ENCODE measurements at regions of chr4 and their contacts with region 1.

Region 1: DNA sequence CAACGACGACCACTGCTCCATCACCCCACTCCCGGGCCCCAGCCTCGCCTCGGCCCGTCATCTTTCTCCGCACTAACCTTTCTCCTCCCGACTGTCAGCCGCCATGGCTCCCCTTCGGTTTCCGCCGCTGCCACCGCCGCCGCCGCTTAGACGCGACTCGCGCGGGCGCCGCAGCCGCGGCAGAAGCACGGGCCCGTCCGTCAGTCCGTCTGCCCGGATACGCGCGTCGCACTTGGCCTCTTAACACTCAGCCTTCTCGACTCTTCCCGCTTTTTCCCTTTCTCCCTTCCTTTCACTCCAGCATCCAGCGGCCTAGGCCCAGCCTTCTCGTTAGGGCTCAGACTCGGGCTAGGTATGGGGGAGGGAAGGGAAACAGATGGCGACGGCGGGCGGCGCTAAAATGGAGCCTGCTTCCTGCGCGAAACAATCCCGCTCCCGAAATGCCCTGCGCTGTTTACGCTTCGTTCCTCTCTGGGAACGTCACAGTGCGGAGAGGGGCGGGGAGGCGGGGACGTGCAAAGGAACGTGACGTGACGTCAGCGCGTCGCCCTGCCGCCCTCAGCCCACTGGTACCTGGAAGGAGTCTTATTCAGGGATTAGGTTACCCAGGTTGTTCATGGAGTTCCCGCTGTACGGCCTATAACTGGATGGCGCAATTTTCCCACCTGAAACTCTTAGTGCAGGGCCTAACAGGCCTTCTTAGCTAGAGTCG is at the start of gene YTHDC1:
- DNase-seq: peak; percentile 84 to 97 (median 95)
- ATAC-seq: peak; percentile 97
- H3K4me3 ChIP-seq: peak within 1 kb of the TSS; percentile 100
- H3K4me3 Mint-ChIP-seq: peak within 1 kb of the TSS; percentile 94 to 100 (median 98)
- H3K27ac ChIP-seq: peak within 1 kb of the TSS; percentile 96
- H3K27ac Mint-ChIP-seq: peak within 1 kb of the TSS; percentile 97 to 100 (median 100)
- H3K4me1 ChIP-seq: peaks cover 26 to 35% of the 10 kb centered on the region in 2 donors
- H3K4me1 Mint-ChIP-seq: peaks cover 16 to 48% (median 41%) of the 10 kb centered on the region in 7 donors
- H3K27me3 ChIP-seq: no peaks in the 10 kb centered on the region
- H3K27me3 Mint-ChIP-seq: peaks cover 0 to 20% (median 0%) of the 10 kb centered on the region in 5 donors
- total RNA-seq, gene YTHDC1: 99.4 to 254 (median 219) TPM

Region 2: DNA sequence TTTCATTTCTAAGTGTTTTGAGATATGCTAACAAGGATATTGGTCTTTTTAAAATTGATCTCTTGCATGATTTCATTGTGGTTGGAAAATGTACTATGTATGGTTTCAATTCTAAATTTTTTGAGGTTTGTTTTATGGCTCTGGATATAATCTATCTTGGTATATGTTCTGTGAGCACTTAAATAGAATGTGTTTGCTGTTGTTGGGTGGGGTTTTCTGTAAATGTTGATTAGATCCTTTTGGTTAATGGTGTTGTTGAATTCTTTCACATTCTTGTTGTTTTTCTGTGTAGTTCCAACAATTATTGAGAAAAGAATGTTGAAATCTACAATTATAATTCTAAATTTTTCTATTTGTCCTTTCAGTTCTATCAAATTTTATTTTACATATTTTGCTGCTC is 553.0 kb before region 1 on chr4:
- CTCF ChIA-PET with region 1: no interaction called
- POLR2A ChIA-PET with region 1: no interaction called
- intact Hi-C with region 1: no loop called
- DNase-seq: no peak
- ATAC-seq: no peak
- H3K4me3 ChIP-seq: no peak overlapping the region
- H3K4me3 Mint-ChIP-seq: no peak overlapping the region
- H3K27ac ChIP-seq: no peak overlapping the region
- H3K27ac Mint-ChIP-seq: no peak overlapping the region
- H3K4me1 ChIP-seq: no peaks in the 10 kb centered on the region
- H3K4me1 Mint-ChIP-seq: no peaks in the 10 kb centered on the region
- H3K27me3 ChIP-seq: no peaks in the 10 kb centered on the region
- H3K27me3 Mint-ChIP-seq: no peaks in the 10 kb centered on the region

Region 3: DNA sequence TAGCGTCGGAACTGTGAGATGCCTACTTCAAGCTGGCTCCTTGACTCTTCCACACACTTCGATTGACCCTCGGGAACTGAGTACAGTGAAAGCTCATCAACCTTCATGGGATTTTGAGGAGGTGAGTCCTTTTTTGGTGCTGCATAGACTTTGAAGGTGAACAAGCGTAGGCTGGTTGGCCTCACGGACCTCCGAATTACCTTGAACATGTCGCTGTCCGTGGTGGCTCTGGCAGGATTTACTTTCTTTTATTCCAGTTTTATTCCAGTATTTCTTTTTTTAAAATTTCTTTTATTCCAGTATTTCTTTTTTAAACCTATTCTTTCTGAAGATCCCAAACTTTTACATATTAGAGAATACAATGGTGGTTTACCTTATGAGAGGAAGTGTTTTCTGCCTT is 45.1 kb before region 1 on chr4:
- CTCF ChIA-PET with region 1: no interaction called
- POLR2A ChIA-PET with region 1: no interaction called
- intact Hi-C with region 1: loop called in 1 of 2 experiments (anchors 5 kb)
- DNase-seq: no peak
- ATAC-seq: no peak
- H3K4me3 ChIP-seq: no peak overlapping the region
- H3K4me3 Mint-ChIP-seq: no peak overlapping the region
- H3K27ac ChIP-seq: no peak overlapping the region
- H3K27ac Mint-ChIP-seq: no peak overlapping the region
- H3K4me1 ChIP-seq: no peaks in the 10 kb centered on the region
- H3K4me1 Mint-ChIP-seq: no peaks in the 10 kb centered on the region
- H3K27me3 ChIP-seq: no peaks in the 10 kb centered on the region
- H3K27me3 Mint-ChIP-seq: peaks cover 0 to 32% (median 7%) of the 10 kb centered on the region in 5 donors

Region 4: GRCh38 chr4:68319040-68319439 is 30.8 kb before region 1 on chr4:
- CTCF ChIA-PET with region 1: no interaction called
- POLR2A ChIA-PET with region 1: interaction called, 6 read pairs
- intact Hi-C with region 1: loop called (anchors 2 kb)
- DNase-seq: no peak
- ATAC-seq: no peak
- H3K4me3 ChIP-seq: no peak overlapping the region
- H3K4me3 Mint-ChIP-seq: peak overlapping the region in 1 of 10 donors; percentile 6
- H3K27ac ChIP-seq: no peak overlapping the region
- H3K27ac Mint-ChIP-seq: peak overlapping the region in 8 of 9 donors; percentile 5 to 82 (median 33)
- H3K4me1 ChIP-seq: no peaks in the 10 kb centered on the region
- H3K4me1 Mint-ChIP-seq: peaks cover 0 to 18% (median 5%) of the 10 kb centered on the region in 7 donors
- H3K27me3 ChIP-seq: no peaks in the 10 kb centered on the region
- H3K27me3 Mint-ChIP-seq: no peaks in the 10 kb centered on the region

Region 5: GRCh38 chr4:68324519-68325262 is 25.1 kb before region 1 on chr4:
- CTCF ChIA-PET with region 1: no interaction called
- POLR2A ChIA-PET with region 1: no interaction called
- intact Hi-C with region 1: loop called in 1 of 2 experiments (anchors 2 kb)
- DNase-seq: no peak
- ATAC-seq: no peak
- H3K4me3 ChIP-seq: no peak overlapping the region
- H3K4me3 Mint-ChIP-seq: no peak overlapping the region
- H3K27ac ChIP-seq: no peak overlapping the region
- H3K27ac Mint-ChIP-seq: peak overlapping the region in 4 of 9 donors; percentile 1 to 55 (median 12)
- H3K4me1 ChIP-seq: no peaks in the 10 kb centered on the region
- H3K4me1 Mint-ChIP-seq: peaks cover 0 to 13% (median 9%) of the 10 kb centered on the region in 7 donors
- H3K27me3 ChIP-seq: no peaks in the 10 kb centered on the region
- H3K27me3 Mint-ChIP-seq: no peaks in the 10 kb centered on the region

Region 6: GRCh38 chr4:68433582-68433981 is 83.8 kb after region 1 on chr4:
- CTCF ChIA-PET with region 1: no interaction called
- POLR2A ChIA-PET with region 1: no interaction called
- intact Hi-C with region 1: loop called in 1 of 2 experiments (anchors 5 kb)
- DNase-seq: no peak
- ATAC-seq: no peak
- H3K4me3 ChIP-seq: no peak overlapping the region
- H3K4me3 Mint-ChIP-seq: no peak overlapping the region
- H3K27ac ChIP-seq: no peak overlapping the region
- H3K27ac Mint-ChIP-seq: peak overlapping the region in 1 of 9 donors; percentile 60
- H3K4me1 ChIP-seq: peaks cover 10 to 22% of the 10 kb centered on the region in 2 donors
- H3K4me1 Mint-ChIP-seq: peaks cover 20 to 54% (median 34%) of the 10 kb centered on the region in 7 donors
- H3K27me3 ChIP-seq: no peaks in the 10 kb centered on the region
- H3K27me3 Mint-ChIP-seq: no peaks in the 10 kb centered on the region

Region 7: DNA sequence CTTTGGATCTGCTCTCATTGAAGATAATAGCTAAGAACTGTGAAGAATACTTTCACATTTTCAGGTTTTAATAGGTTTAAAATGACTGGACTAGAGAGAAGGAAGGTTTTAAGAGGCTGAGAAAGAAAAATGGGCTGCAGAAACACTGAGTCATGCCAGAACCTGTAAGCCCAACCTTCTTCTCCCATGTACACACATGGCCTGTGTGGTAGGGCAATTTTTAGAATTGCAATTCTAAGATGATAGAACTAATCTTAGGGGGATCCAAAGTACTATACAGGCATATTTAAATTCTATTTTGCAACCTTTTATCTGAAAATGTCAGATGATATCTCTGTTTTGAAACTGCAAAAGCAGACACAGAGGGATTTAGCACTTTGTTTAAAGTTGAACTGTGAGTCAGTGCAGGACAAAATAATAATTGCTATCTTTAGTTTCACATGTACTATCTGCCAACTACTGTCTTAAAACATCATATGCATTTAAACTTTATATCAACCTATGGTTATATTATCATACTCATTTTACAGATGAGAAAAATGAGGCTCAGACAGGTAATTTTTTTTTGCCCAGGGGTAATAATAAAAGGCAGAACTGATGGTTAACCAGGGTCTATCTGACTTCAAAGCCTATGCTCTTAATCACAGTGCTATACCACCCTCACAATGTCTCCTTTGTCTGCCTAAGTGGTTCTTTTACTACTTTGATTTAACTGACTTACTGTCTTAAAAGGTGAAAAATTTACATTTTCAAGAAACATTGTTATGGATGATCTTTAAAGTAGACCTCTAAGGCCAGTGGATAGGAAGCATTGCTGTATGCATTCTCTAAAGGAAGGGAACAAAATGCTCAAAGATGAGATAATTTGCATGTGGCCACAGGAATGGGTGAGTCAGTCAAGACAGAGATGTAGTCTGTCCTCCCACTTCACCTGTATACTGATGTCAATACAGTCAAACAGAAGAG is 101.7 kb after region 1 on chr4:
- CTCF ChIA-PET with region 1: no interaction called
- POLR2A ChIA-PET with region 1: no interaction called
- intact Hi-C with region 1: no loop called
- DNase-seq: no peak
- ATAC-seq: no peak
- H3K4me3 ChIP-seq: no peak overlapping the region
- H3K4me3 Mint-ChIP-seq: no peak overlapping the region
- H3K27ac ChIP-seq: no peak overlapping the region
- H3K27ac Mint-ChIP-seq: no peak overlapping the region
- H3K4me1 ChIP-seq: no peaks in the 10 kb centered on the region
- H3K4me1 Mint-ChIP-seq: peaks cover 6 to 49% (median 30%) of the 10 kb centered on the region in 7 donors
- H3K27me3 ChIP-seq: no peaks in the 10 kb centered on the region
- H3K27me3 Mint-ChIP-seq: peaks cover 0 to 10% (median 0%) of the 10 kb centered on the region in 5 donors

Region 8: GRCh38 chr4:68864438-68865187 is 514.8 kb after region 1 on chr4:
- CTCF ChIA-PET with region 1: no interaction called
- POLR2A ChIA-PET with region 1: no interaction called
- intact Hi-C with region 1: no loop called
- DNase-seq: no peak
- ATAC-seq: no peak
- H3K4me3 ChIP-seq: no peak overlapping the region
- H3K4me3 Mint-ChIP-seq: no peak overlapping the region
- H3K27ac ChIP-seq: no peak overlapping the region
- H3K27ac Mint-ChIP-seq: no peak overlapping the region
- H3K4me1 ChIP-seq: no peaks in the 10 kb centered on the region
- H3K4me1 Mint-ChIP-seq: no peaks in the 10 kb centered on the region
- H3K27me3 ChIP-seq: no peaks in the 10 kb centered on the region
- H3K27me3 Mint-ChIP-seq: peaks cover 0 to 6% (median 0%) of the 10 kb centered on the region in 5 donors

Measured in naive thymus-derived CD4-positive, alpha-beta T cell (primary cell).